ENCODE measurements at regions of chr17 and their contacts with region 1.

Region 1: DNA sequence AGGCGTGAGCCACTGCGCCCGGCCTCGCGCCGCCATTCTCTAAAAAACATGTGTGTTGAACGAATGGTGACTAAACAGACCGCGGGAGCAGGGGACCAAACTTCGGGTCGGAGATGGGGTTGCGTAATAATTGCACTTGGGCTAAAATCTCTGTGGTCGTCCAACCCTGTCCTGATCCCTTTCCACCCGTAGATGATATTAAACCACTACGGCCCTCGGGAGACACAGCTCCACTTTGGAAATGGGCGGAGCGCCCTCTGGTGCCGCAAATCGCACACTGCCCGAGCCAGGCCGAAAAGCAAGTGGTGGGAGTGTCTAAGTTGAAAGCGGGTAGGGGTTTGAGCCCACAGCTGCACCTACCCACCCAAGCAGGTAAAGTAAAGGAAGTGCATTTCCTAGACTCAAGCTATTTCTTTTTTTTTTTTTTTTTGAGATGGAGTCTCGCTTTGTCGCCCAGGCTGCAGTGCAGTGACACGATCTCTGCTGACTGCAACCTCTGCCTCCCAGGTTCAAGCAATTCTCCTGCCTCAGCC is 17.0 kb downstream of the CAVIN1 start:
- DNase-seq: peak; percentile 88 to 95
- ATAC-seq: peak; percentile 81
- H3K4me3 ChIP-seq: no peak overlapping the region
- H3K27ac ChIP-seq: no peak overlapping the region
- H3K4me1 ChIP-seq: no peaks in the 10 kb centered on the region
- H3K27me3 ChIP-seq: no peaks in the 10 kb centered on the region

Region 2: GRCh38 chr17:42322382-42323267 is 83.4 kb before region 1 on chr17:
- intact Hi-C with region 1: loop called (anchors 2 kb)
- DNase-seq: peak; percentile 94 to 97
- ATAC-seq: peak; percentile 90
- H3K4me3 ChIP-seq: no peak overlapping the region
- H3K27ac ChIP-seq: peak overlapping the region in 1 of 2 donors; percentile 4
- H3K4me1 ChIP-seq: no peaks in the 10 kb centered on the region
- H3K27me3 ChIP-seq: no peaks in the 10 kb centered on the region